ENCODE measurements at regions of chr1 and their contacts with region 1.

Region 1: GRCh38 chr1:182604169-182605164 is at the start of gene RGS16:
- DNase-seq: no peak
- ATAC-seq: peak; percentile 47
- H3K4me3 ChIP-seq: no peak within 1 kb of the TSS
- H3K27ac ChIP-seq: no peak within 1 kb of the TSS
- H3K4me1 ChIP-seq: no peaks in the 10 kb centered on the region
- H3K27me3 ChIP-seq: peaks cover 3 to 19% of the 10 kb centered on the region in 2 experiments; a peak in 3 of 5 replicates
- CTCF ChIP-seq: no peak
- EP300 ChIP-seq: no peak
- POLR2A ChIP-seq: no peak
- RAD21 ChIP-seq: no peak
- total RNA-seq, gene RGS16: not detected in 2 replicates

Region 2: GRCh38 chr1:182781841-182782586 is 177.5 kb after region 1 on chr1:
- CTCF ChIA-PET with region 1: interaction called, 44 read pairs
- POLR2A ChIA-PET with region 1: no interaction called
- in situ Hi-C with region 1: loop called (anchors 5 kb)
- intact Hi-C with region 1: loop called (anchors 1 kb)
- DNase-seq: peak; percentile 28
- ATAC-seq: peak; percentile 90
- H3K4me3 ChIP-seq: no peak overlapping the region
- H3K27ac ChIP-seq: no peak overlapping the region
- H3K4me1 ChIP-seq: no peaks in the 10 kb centered on the region
- H3K27me3 ChIP-seq: no peaks in the 10 kb centered on the region
- CTCF ChIP-seq: peak; percentile 74
- EP300 ChIP-seq: no peak
- POLR2A ChIP-seq: no peak
- RAD21 ChIP-seq: no peak

Region 3: GRCh38 chr1:182789138-182790076 is 184.9 kb after region 1 on chr1 and contains the start of gene NPL:
- CTCF ChIA-PET with region 1: interaction called, 44 read pairs
- POLR2A ChIA-PET with region 1: no interaction called
- in situ Hi-C with region 1: loop called (anchors 5 kb)
- intact Hi-C with region 1: no loop called
- DNase-seq: peak; percentile 22
- ATAC-seq: peak; percentile 96
- H3K4me3 ChIP-seq: peak within 1 kb of the TSS; percentile 25 to 62 (median 33); a peak in 5 of 6 replicates
- H3K27ac ChIP-seq: no peak within 1 kb of the TSS
- H3K4me1 ChIP-seq: peaks cover 13% of the 10 kb centered on the region
- H3K27me3 ChIP-seq: peaks cover 8 to 41% of the 10 kb centered on the region in 2 experiments
- CTCF ChIP-seq: no peak; the same call in 1 of the 2 replicates
- EP300 ChIP-seq: no peak
- POLR2A ChIP-seq: no peak
- RAD21 ChIP-seq: no peak
- total RNA-seq, gene NPL: 0.04 TPM in 1 of 2 replicates, not detected in the other

Region 4: DNA sequence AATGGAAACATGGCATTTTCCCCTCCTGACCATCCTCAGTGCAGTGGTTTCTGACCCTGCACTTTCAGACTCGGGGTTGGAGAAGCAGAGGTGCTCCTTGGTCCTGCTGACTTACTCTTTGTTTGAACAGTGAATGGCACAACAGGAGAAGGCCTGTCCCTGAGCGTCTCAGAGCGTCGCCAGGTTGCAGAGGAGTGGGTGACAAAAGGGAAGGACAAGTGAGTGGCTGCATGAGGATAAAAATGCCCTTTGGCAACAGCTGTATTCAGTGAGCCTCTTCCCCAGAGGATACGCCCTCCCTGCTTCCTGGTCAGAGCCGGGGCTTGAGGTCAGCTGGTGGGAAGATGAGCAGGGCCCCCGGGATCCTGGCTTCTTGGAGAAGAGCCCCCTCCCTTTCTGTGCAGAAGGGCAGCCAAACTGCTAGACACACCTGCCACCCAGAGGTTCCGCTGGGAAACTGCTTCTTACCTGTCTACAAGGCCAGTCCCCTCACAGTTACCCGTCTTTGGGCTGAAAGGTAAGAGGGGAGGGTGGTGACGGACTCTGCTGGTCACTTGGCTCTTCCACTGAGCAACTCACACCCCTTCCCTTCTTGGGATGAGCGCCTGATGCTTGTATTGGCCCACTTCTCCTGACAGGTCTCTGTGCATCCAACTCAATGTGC is 201.7 kb after region 1 on chr1:
- CTCF ChIA-PET with region 1: interaction called, 3 read pairs
- POLR2A ChIA-PET with region 1: no interaction called
- in situ Hi-C with region 1: no loop called
- intact Hi-C with region 1: loop called (anchors 1 kb)
- DNase-seq: peak; percentile 12
- ATAC-seq: peak; percentile 82
- H3K4me3 ChIP-seq: no peak overlapping the region
- H3K27ac ChIP-seq: no peak overlapping the region
- H3K4me1 ChIP-seq: no peaks in the 10 kb centered on the region
- H3K27me3 ChIP-seq: peaks cover 0 to 1% of the 10 kb centered on the region in 2 experiments; a peak in 2 of 5 replicates
- CTCF ChIP-seq: peak; percentile 61
- EP300 ChIP-seq: no peak
- POLR2A ChIP-seq: no peak
- RAD21 ChIP-seq: no peak

Measured in HepG2 (cell line).